ENCODE measurements at regions of chr2 and their contacts with region 1.

Region 1: DNA sequence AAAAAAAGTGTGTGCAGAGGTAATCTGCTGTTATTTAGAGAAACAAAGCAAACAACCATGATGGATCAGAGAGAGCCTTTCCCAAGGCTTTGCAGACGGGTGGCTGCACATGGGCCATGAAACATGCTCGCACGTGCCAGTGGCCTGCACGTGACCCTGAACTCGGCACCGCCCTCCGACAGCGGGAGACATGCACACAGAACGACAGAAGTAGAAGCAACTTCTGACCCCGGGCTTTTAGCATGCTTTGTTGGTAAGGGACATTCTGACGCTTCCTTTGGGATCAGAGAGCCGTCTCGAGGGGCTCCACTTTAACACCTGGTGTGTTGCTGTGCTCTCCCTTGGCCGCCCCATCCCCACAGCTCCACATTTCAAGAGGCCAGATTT is 112.5 kb downstream of the KCNF1 start:
- DNase-seq: no peak
- ATAC-seq: no peak
- H3K4me3 ChIP-seq: no peak overlapping the region
- H3K27ac ChIP-seq: no peak overlapping the region
- H3K4me1 ChIP-seq: no peaks in the 10 kb centered on the region; the same call in 1 of the 2 replicates
- H3K27me3 ChIP-seq: 0 out of 2 replicates have a peak, but pooled peaks cover 4% of the 10 kb centered on the region
- CTCF ChIP-seq: no peak

Region 2: GRCh38 chr2:10812362-10813162 is 211.7 kb before region 1 on chr2 and contains the start of gene PDIA6:
- CTCF ChIA-PET with region 1: no interaction called
- POLR2A ChIA-PET with region 1: no interaction called
- intact Hi-C with region 1: no loop called
- DNase-seq: peak; percentile 97
- ATAC-seq: peak; percentile 94
- H3K4me3 ChIP-seq: peak within 1 kb of the TSS; percentile 78
- H3K27ac ChIP-seq: peak within 1 kb of the TSS; percentile 64
- H3K4me1 ChIP-seq: peaks cover 22% of the 10 kb centered on the region
- H3K27me3 ChIP-seq: no peaks in the 10 kb centered on the region
- CTCF ChIP-seq: no peak
- total RNA-seq, gene PDIA6: 350 and 351 TPM in 2 replicates

Region 3: DNA sequence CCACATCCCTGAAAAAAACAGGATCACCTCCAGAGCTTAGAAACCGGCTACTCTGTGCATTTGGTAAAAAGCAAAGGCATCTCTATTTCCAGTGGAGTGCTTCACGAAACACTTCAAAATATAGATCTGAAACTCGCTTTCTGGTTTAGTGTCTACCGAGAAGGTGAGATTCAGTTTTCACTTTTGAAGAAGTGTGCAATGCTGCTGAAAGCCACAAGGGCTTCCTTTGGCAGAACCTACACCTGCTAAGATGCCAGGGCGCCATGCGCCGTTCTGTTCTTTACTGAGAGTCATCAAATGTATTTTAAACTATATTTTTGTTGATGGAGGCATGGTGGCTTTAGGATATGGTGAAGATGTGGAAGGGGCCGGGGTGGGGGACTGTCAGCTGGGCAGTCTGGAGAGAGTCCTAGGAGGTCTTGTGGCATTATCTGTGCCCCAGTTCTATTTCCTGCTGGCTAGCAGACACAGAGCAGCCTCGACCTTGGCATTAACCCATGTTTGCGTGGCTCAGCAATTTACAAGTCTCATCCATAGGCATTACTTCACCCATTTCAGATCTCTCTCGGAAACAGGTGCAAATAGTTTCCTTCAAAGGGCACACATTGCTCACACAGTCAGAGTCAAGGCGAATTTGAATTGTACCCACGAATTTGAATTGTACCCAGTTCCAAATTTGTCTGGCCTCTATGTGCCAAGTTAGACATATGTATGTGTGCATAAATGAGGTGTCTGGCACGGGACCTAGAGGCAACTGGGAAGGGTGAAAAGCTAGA is 159.2 kb before region 1 on chr2:
- CTCF ChIA-PET with region 1: no interaction called
- POLR2A ChIA-PET with region 1: no interaction called
- intact Hi-C with region 1: no loop called
- DNase-seq: no peak
- ATAC-seq: no peak
- H3K4me3 ChIP-seq: no peak overlapping the region
- H3K27ac ChIP-seq: no peak overlapping the region
- H3K4me1 ChIP-seq: peaks cover 13% of the 10 kb centered on the region
- H3K27me3 ChIP-seq: peaks cover 32% of the 10 kb centered on the region
- CTCF ChIP-seq: peak; percentile 30; the same call in 1 of the 2 replicates

Region 4: DNA sequence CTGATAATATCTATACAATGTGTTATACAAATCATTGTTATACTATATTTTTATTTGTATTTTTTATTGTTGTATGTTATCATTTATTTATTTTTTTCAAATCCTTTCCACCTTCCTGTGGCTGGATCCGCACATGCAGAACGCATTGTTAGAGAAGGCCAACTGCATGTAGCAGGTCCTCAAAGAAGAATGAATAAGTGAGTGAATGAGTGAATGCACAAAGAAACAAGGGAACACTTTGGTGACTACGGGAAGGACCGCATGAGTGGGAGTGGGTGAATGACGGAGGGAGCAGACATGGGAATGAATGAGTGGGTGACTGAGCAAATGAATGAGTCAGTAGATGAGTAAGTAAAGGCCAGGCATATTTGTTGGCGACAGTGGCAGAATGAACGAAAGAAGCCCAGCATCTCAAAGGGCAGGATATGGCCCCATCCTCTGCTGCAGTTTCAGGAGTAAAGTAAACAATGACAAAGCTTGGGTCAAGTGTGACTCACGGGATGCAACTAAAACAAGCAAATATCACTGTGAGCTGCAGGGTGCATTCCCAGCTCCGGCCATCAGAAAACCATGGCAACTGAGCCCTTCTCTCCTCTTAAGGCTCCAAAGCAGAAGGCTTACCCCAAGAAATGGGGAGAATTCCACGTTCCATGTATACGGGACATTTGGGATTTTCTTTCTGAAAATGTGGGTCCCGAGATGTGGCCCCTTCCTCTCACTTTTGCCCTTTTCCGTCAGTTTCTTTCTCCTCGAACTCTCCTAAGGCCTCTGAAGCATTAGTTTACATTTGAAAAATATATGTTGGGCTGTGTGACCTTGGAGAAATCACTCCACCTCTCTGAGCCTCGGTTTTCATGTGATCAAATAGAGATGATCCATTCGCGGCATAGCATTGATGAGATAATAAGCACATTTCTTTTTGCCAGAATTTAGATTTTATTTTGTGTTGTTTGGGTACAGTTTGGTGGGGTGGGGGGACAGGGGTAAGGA is 88.0 kb before region 1 on chr2:
- CTCF ChIA-PET with region 1: no interaction called
- POLR2A ChIA-PET with region 1: no interaction called
- intact Hi-C with region 1: loop called (anchors 10 kb)
- DNase-seq: peak; percentile 98
- ATAC-seq: peak; percentile 84
- H3K4me3 ChIP-seq: no peak overlapping the region
- H3K27ac ChIP-seq: peak overlapping the region; percentile 99
- H3K4me1 ChIP-seq: peaks cover 45% of the 10 kb centered on the region
- H3K27me3 ChIP-seq: no peaks in the 10 kb centered on the region
- CTCF ChIP-seq: no peak

Measured in PC-3 (cell line).